K562 (cell line): ENCODE measurements at regions of chr2 and their contacts with region 1.

Region 1: GRCh38 chr2:46751897-46752296 is 163.7 kb downstream of the MCFD2 start:
- DNase-seq: no peak
- ATAC-seq: no peak
- H3K4me3 ChIP-seq: no peak overlapping the region
- H3K27ac ChIP-seq: no peak overlapping the region
- H3K4me1 ChIP-seq: peaks cover 4 to 19% of the 10 kb centered on the region in 2 experiments; a peak in 3 of 5 replicates
- H3K27me3 ChIP-seq: no peaks in the 10 kb centered on the region
- CTCF ChIP-seq: no peak
- EP300 ChIP-seq: no peak
- POLR2A ChIP-seq: no peak
- RAD21 ChIP-seq: no peak

Region 2: DNA sequence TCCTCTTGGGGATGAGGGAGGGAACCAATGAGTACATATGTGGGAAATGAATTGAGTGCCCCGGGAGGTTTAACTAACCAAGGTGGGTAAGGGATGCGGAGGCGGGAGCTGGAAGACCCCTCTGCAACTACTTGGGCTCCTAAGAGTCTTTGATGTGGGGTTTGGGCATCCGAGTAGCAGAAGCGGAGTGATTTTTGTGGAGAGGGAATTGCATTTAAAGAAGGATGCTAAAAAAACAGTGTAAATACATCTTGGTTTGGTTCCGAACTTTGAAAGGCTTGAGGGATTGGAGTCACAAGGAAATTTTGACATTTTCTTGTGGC is 52.0 kb before region 1 on chr2:
- CTCF ChIA-PET with region 1: no interaction called
- POLR2A ChIA-PET with region 1: no interaction called
- in situ Hi-C with region 1: no loop called
- intact Hi-C with region 1: loop called (anchors 5 kb)
- DNase-seq: peak in 1 of 4 experiments; percentile 29
- ATAC-seq: no peak
- H3K4me3 ChIP-seq: peak overlapping the region; percentile 83
- H3K27ac ChIP-seq: peak overlapping the region; percentile 77; the same call in 2 of the 3 replicates
- H3K4me1 ChIP-seq: peaks cover 3 to 20% of the 10 kb centered on the region in 2 experiments; a peak in 4 of 5 replicates
- H3K27me3 ChIP-seq: no peaks in the 10 kb centered on the region
- CTCF ChIP-seq: no peak
- EP300 ChIP-seq: no peak
- POLR2A ChIP-seq: no peak
- RAD21 ChIP-seq: no peak